Body of pancreas (tissue), 4 donors: ENCODE measurements at regions of chr19 and their contacts with region 1.

Region 1: GRCh38 chr19:52139252-52140031 is at the start of gene ZNF616:
- DNase-seq: peak; percentile 97 to 99 (median 98)
- ATAC-seq: peak; percentile 98
- H3K4me3 ChIP-seq: peak within 1 kb of the TSS; percentile 46 to 82
- H3K27ac ChIP-seq: peak within 1 kb of the TSS; percentile 90 to 95 (median 94)
- H3K4me1 ChIP-seq: peaks cover 21% of the 10 kb centered on the region
- H3K27me3 ChIP-seq: no peaks in the 10 kb centered on the region
- CTCF ChIP-seq: peak; percentile 57 to 93 (median 81)
- POLR2A ChIP-seq: peak; percentile 30 to 86 (median 84)
- total RNA-seq, gene ZNF616: 3.6 to 6.2 TPM

Region 2: GRCh38 chr19:52237771-52238400 is 98.4 kb after region 1 on chr19:
- intact Hi-C with region 1: loop called (anchors 5 kb)
- DNase-seq: peak; percentile 59 to 67 (median 62)
- ATAC-seq: peak; percentile 71
- H3K4me3 ChIP-seq: no peak overlapping the region
- H3K27ac ChIP-seq: no peak overlapping the region
- H3K4me1 ChIP-seq: no peaks in the 10 kb centered on the region
- H3K27me3 ChIP-seq: no peaks in the 10 kb centered on the region
- CTCF ChIP-seq: peak; percentile 58 to 92 (median 81)
- POLR2A ChIP-seq: no peak